ENCODE measurements at regions of chr2 and their contacts with region 1.

Region 1: GRCh38 chr2:36389091-36389564 is 33.5 kb downstream of the CRIM1 start:
- DNase-seq: no peak
- H3K4me3 ChIP-seq: no peak overlapping the region
- H3K27ac ChIP-seq: peak overlapping the region; percentile 17 to 58 (median 54)
- H3K4me1 ChIP-seq: peaks cover 0 to 33% (median 13%) of the 10 kb centered on the region in 4 donors
- H3K27me3 ChIP-seq: no peaks in the 10 kb centered on the region
- CTCF ChIP-seq: no peak
- EP300 ChIP-seq: no peak
- POLR2A ChIP-seq: no peak

Region 2: GRCh38 chr2:36362291-36362690 is 26.8 kb before region 1 on chr2:
- in situ Hi-C with region 1: no loop called
- intact Hi-C with region 1: loop called (anchors 1 kb)
- DNase-seq: no peak
- H3K4me3 ChIP-seq: no peak overlapping the region
- H3K27ac ChIP-seq: peak overlapping the region in 1 of 4 donors; percentile 22
- H3K4me1 ChIP-seq: peaks cover 15 to 71% (median 55%) of the 10 kb centered on the region in 4 donors
- H3K27me3 ChIP-seq: no peaks in the 10 kb centered on the region
- CTCF ChIP-seq: no peak
- EP300 ChIP-seq: no peak
- POLR2A ChIP-seq: no peak

Region 3: DNA sequence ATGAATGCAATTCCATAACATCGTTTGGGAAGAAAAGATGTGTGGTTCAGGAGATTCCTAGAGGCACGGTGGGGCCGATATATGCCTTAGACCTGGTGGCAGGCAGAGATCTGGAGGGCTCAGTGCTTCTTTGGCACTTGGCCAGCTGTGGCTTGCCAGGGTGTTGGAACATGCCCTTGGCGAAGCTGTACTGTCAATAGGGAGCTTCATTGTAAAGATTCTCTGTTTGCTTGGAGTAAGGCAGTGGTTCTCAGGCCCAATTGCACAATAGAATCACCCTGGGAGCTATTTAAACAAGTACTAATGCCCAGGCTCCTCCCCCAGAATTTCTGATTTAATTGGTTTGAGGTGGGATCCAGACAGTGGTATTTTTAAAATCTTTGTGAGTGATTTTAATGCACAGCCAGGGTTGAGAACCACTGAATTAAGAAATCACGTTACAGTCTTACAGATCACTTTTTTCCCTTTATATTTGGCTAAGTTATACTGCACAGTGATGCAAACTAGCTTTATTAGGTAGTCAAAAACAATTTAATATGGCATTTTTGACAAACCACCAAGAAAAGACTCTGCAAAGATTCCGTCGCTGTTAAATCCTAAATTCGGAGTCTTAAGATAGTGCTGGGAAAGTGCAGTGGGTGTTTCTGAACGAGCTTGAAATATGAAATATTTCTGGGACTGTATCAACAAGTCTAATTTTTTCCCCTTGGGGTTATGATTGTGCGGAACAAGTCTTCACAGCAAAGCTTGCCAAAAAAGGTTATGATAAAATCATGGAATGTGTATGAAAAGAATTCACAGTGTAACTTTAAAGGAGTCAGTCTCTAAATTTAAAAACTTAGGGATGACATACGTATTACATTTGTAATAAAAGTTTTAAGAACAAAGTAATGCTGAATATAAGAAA is 44.4 kb after region 1 on chr2:
- in situ Hi-C with region 1: no loop called
- intact Hi-C with region 1: no loop called
- DNase-seq: peak; percentile 25
- H3K4me3 ChIP-seq: no peak overlapping the region
- H3K27ac ChIP-seq: peak overlapping the region; percentile 51 to 65 (median 56)
- H3K4me1 ChIP-seq: peaks cover 0 to 21% (median 17%) of the 10 kb centered on the region in 4 donors
- H3K27me3 ChIP-seq: no peaks in the 10 kb centered on the region
- CTCF ChIP-seq: no peak
- EP300 ChIP-seq: no peak
- POLR2A ChIP-seq: no peak

Region 4: GRCh38 chr2:36539631-36540030 is 150.5 kb after region 1 on chr2:
- in situ Hi-C with region 1: no loop called
- intact Hi-C with region 1: no loop called
- DNase-seq: no peak
- H3K4me3 ChIP-seq: no peak overlapping the region
- H3K27ac ChIP-seq: no peak overlapping the region
- H3K4me1 ChIP-seq: no peaks in the 10 kb centered on the region
- H3K27me3 ChIP-seq: no peaks in the 10 kb centered on the region
- CTCF ChIP-seq: no peak
- EP300 ChIP-seq: no peak
- POLR2A ChIP-seq: no peak

Region 5: GRCh38 chr2:36902385-36903120 is 513.4 kb after region 1 on chr2:
- in situ Hi-C with region 1: no loop called
- intact Hi-C with region 1: no loop called
- DNase-seq: no peak
- H3K4me3 ChIP-seq: no peak overlapping the region
- H3K27ac ChIP-seq: no peak overlapping the region
- H3K4me1 ChIP-seq: no peaks in the 10 kb centered on the region
- H3K27me3 ChIP-seq: no peaks in the 10 kb centered on the region
- CTCF ChIP-seq: no peak
- EP300 ChIP-seq: no peak
- POLR2A ChIP-seq: no peak